ENCODE measurements at regions of chr16 and their contacts with region 1.

Region 1: GRCh38 chr16:48244080-48244862 is at the start of gene LONP2:
- DNase-seq: peak; percentile 98
- H3K4me3 Mint-ChIP-seq: peak within 1 kb of the TSS; percentile 90
- H3K27ac Mint-ChIP-seq: peak within 1 kb of the TSS; percentile 91
- H3K4me1 Mint-ChIP-seq: peaks cover 16% of the 10 kb centered on the region
- H3K27me3 Mint-ChIP-seq: peaks cover 2% of the 10 kb centered on the region
- total RNA-seq, gene LONP2: 57.3 and 58.9 TPM in 2 replicates

Region 2: DNA sequence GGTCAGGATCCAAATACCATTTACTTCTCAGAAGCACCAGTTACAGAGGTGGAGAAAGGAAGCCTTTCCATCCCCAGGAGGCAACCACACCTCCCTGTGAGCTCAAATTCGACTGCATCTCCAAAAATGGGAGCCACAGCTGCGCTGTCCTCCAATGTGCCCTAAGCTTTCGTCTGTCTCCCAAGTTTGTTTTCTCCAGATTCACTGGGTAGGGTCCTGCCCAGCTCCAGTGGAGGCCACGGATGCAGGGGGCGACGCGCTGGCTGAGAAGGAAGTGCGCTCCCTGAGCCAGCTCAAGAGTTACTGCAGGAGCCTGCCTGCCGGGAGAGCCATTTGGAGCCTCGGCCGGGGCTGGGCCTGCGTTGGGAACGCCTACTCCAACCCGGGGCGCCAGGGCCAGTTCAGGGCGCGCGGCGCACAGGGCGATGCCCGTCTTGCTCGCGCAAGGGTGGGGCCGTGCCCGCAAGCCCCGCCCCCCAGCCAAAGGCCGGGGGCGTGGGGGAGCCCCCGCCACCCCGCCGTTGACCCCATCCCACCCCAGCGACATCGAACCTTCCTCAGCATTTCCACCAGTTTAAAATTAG is 121.4 kb after region 1 on chr16:
- intact Hi-C with region 1: loop called (anchors 5 kb)
- DNase-seq: peak; percentile 95
- H3K4me3 Mint-ChIP-seq: peak overlapping the region; percentile 89
- H3K27ac Mint-ChIP-seq: peak overlapping the region; percentile 91
- H3K4me1 Mint-ChIP-seq: peaks cover 46% of the 10 kb centered on the region
- H3K27me3 Mint-ChIP-seq: no peaks in the 10 kb centered on the region

Region 3: DNA sequence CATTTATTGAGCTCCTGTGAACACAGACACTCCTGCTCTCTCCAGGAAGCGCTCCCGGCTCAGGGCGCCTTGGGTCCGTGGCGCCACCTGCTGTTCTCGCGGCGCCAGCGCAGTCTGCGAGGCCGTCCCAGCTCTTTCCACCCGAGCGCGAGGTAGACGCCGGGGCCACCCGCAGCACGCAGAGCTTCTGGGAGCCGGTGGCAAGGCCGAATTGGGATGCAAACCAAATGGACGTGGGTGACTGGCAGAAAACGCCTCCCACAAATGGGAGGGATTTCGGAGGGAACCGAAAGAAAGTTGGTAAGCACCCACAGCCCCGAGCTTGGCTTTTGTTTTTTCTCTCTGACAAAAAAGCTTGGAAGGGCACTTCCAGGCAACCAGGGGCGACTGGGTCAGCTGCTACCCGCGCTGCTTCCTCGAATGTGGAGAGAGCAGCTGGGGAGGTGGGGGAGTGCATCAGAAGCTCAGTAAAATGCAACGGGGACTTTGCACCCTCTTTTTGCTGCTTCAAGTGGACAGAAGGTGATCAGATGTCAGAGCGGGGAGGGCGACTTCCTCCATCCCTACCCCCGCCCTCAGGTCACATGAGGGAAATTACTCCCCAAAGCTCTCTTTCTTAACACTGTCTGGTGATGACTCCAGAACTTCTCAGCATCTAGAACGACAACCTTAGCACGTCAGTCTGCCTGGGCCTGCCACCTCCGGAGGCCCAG is 379.2 kb after region 1 on chr16:
- intact Hi-C with region 1: loop called (anchors 5 kb)
- DNase-seq: peak; percentile 96
- H3K4me3 Mint-ChIP-seq: peak overlapping the region; percentile 80
- H3K27ac Mint-ChIP-seq: peak overlapping the region; percentile 79
- H3K4me1 Mint-ChIP-seq: peaks cover 25% of the 10 kb centered on the region
- H3K27me3 Mint-ChIP-seq: peaks cover 10% of the 10 kb centered on the region